Breast epithelium (tissue), 4 donors: ENCODE measurements at regions of chr1 and their contacts with region 1.

Region 1: DNA sequence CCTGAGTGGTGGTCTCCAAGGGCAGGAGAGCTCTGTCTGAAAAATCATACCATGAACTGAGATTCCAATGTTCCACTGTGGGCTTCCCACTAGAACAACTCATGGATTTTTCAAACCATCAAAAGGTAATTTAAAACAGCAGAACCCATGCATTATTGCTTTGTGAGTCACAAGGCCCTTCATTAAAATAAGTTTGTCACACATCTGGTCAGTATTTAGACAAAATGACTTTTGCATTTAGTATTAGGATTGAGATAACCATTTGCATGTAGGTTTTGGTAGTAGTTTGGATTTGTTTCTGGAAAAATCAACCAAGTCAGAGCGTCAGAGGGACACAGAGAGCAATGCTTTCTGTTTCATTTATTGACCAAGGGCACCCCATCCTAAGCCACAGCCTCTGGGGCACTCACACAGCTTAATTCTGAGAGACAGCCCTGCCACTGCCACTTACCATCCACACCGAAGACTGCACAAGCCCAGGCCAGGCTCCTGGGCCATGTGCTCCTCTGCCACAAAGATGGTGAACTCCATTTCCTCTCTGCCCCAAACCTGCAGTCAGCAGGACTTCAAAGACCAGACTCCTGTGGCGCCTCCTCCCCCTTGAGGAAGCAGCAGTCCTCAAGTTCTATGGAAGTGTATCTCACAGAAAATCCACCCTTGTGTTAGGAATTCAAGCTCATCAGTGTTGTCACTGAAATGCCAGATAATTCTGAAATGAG is 132.6 kb upstream of the DUSP10 start:
- DNase-seq: no peak
- H3K4me3 ChIP-seq: no peak overlapping the region
- H3K27ac ChIP-seq: no peak overlapping the region
- H3K4me1 ChIP-seq: no peaks in the 10 kb centered on the region
- H3K27me3 ChIP-seq: no peaks in the 10 kb centered on the region
- CTCF ChIP-seq: no peak
- POLR2A ChIP-seq: no peak

Region 2: GRCh38 chr1:221725735-221726672 is 148.4 kb before region 1 on chr1:
- intact Hi-C with region 1: no loop called
- DNase-seq: no peak
- H3K4me3 ChIP-seq: no peak overlapping the region
- H3K27ac ChIP-seq: no peak overlapping the region
- H3K4me1 ChIP-seq: no peaks in the 10 kb centered on the region
- H3K27me3 ChIP-seq: no peaks in the 10 kb centered on the region
- CTCF ChIP-seq: no peak
- POLR2A ChIP-seq: no peak

Region 3: DNA sequence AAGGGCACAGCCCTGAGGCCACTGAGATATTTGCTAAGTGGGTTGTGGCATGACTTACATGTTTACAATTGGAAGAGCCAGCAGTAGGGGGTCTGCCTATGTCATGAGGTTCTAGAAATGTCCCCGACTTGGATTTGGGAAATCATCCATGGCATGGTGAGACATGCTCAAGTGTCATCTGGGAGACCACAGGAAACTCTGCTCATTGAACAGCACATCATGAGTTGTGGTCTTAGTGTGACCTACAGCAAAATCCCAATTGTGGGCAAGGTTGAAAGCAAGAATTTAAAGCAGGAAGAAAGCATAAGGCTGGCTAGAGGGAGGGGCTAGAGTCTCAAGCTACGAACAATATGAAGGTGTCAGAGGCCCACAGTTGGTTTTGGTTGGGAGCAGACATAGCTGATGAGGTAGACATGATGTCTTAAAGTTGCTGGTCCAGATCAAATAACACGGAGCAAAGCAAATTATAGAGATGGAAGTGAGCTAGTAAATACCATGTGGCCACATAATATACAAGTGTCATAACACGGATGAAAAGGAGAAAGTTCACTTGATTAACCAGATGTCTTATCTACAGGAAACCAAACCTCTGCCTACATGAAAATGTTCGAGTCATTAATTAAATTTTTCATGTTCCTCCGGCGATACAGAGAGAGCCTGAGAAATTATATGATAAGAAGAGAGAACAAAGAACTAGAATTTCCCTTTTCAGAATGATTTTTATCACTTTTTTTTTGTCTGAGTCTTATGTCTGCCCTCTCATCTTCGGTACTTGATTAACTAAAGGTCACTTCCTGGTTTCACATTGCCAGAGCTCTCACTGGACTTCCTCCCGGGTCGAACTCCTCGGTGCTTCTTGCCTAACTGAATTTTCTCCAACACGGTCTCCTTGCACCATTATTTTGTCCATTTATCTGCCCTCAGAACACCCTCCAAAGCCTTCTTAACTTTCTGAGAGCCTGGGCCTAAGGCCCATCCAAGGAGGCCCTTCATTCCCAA is 65.1 kb before region 1 on chr1:
- intact Hi-C with region 1: no loop called
- DNase-seq: no peak
- H3K4me3 ChIP-seq: no peak overlapping the region
- H3K27ac ChIP-seq: no peak overlapping the region
- H3K4me1 ChIP-seq: no peaks in the 10 kb centered on the region
- H3K27me3 ChIP-seq: no peaks in the 10 kb centered on the region
- CTCF ChIP-seq: no peak
- POLR2A ChIP-seq: no peak

Region 4: DNA sequence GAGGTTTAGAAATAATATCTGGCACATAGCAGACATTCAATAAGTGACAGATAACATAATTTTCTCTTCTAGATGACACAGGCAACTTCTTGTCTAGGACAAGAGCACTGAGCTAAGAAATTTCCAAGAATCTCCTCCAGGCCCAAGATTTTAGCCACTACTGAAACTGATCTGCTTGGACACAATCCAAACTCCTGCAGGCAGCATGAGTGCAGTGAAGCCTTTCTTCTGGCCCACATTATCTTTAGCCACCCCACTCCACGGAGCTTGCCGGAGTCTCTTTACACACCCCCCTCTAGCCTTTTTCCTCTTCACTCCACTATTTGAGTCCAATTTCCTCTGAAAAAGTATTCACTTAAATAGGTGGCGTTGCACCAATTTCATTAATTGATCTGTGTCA is 10.4 kb after region 1 on chr1:
- intact Hi-C with region 1: loop called (anchors 1 kb)
- DNase-seq: no peak
- H3K4me3 ChIP-seq: no peak overlapping the region
- H3K27ac ChIP-seq: no peak overlapping the region
- H3K4me1 ChIP-seq: no peaks in the 10 kb centered on the region
- H3K27me3 ChIP-seq: no peaks in the 10 kb centered on the region
- CTCF ChIP-seq: no peak
- POLR2A ChIP-seq: no peak